ENCODE measurements at regions of chr2 and their contacts with region 1.

Region 1: DNA sequence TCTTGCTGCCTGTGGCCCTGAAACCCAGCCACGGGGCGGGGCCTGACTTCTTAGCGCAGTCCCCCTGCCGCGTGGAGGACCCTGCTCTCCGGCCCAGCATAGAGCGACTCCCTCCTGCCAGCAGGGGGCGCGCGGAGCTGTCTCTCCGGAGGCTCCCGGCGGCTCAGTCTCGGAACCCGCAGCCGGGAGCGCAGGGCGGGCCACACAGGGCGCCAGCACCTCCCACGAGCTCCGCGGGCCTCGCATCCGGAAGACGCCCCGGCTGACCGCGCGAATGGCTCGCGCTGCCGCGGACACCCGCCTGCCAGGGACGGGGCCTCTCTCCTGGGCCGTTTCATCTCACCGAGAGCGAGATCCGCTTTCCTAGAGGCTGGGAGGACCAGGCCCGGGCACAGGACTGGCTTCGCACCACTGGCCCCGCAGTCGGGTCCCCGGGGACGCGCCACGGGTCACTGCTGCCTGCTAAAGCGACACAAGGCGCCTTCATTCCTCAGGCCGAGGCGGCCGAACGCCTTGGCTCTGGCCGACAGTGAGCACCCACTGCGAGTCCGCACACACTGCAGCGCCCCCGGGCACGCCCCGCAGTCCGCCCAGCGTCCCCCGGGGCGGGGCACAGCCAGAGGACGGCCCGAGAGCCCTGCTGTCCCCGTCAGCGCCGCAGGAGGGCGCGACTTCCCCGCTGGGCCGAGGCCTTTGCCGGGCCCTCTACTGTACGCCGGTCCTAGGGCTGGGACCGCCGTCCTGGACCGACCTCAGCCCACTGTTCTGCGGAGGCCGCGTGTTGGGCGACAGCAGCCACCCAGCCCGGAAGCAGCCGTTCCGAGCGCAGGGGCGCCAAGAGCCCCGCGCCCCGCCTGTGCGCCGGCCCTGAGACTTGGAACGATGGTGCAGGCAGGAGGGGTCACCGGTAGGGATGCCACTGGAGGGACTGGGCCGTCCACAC is 39.0 kb upstream of the ARHGEF4 start:
- DNase-seq: peak; percentile 87 to 95 (median 90)
- H3K4me3 ChIP-seq: peak overlapping the region; percentile 72
- H3K27ac ChIP-seq: peak overlapping the region; percentile 70 to 87
- H3K4me1 ChIP-seq: peaks cover 3% of the 10 kb centered on the region
- H3K27me3 ChIP-seq: no peaks in the 10 kb centered on the region
- CTCF ChIP-seq: peak; percentile 75 to 93 (median 80)
- EP300 ChIP-seq: no peak
- POLR2A ChIP-seq: no peak

Region 2: DNA sequence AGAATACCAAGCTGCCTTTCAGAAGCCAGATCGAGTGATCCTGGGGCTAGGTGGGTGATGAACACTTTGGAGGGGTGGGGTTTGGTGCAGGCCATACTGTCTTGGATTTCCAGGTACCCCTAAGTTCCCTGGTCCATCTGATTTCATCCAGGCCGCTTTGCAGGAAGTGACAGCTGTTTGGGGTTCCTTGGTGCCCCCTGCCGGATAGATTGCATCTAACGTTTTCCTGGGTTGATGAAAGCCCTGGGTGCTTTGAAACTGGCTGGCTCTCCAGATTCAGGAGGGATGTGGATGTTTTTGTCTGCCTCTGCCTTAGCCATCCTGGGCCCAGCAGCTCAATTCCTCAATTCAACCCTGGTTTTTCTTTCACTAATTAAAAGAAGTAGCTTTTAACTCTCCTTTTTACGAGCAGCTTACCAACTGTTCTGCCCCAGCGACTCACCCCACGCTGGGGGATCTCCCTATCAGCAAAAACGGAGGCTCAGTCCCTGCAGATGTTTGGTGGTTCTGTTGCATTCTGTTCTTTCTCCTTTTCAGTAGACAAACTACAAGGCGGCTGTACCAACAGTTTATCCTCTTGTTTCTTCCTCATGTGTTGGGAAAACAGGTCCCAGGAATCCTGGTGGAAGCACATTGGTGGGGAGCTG is 76.1 kb after region 1 on chr2:
- intact Hi-C with region 1: loop called in 3 of 4 experiments (anchors 1 to 5 kb)
- DNase-seq: peak; percentile 39 to 76 (median 54)
- H3K4me3 ChIP-seq: no peak overlapping the region
- H3K27ac ChIP-seq: no peak overlapping the region
- H3K4me1 ChIP-seq: no peaks in the 10 kb centered on the region
- H3K27me3 ChIP-seq: no peaks in the 10 kb centered on the region
- CTCF ChIP-seq: peak in 1 of 3 donors; percentile 13
- EP300 ChIP-seq: no peak
- POLR2A ChIP-seq: no peak